HCT116 (cell line): ENCODE measurements at regions of chr3 and their contacts with region 1.

Region 1: GRCh38 chr3:192917404-192918274 is at the start of gene MB21D2:
- DNase-seq: peak; percentile 69
- ATAC-seq: peak; percentile 89
- H3K4me3 ChIP-seq: peak within 1 kb of the TSS; percentile 74 to 88
- H3K27ac ChIP-seq: peak within 1 kb of the TSS; percentile 58
- H3K4me1 ChIP-seq: peaks cover 0 to 19% of the 10 kb centered on the region in 2 experiments; a peak in 2 of 4 replicates
- H3K27me3 ChIP-seq: no peaks in the 10 kb centered on the region
- CTCF ChIP-seq: no peak
- POLR2A ChIP-seq: peak; percentile 82
- RAD21 ChIP-seq: no peak; the same call in 1 of the 2 replicates
- total RNA-seq, gene MB21D2: 2.8 TPM

Region 2: DNA sequence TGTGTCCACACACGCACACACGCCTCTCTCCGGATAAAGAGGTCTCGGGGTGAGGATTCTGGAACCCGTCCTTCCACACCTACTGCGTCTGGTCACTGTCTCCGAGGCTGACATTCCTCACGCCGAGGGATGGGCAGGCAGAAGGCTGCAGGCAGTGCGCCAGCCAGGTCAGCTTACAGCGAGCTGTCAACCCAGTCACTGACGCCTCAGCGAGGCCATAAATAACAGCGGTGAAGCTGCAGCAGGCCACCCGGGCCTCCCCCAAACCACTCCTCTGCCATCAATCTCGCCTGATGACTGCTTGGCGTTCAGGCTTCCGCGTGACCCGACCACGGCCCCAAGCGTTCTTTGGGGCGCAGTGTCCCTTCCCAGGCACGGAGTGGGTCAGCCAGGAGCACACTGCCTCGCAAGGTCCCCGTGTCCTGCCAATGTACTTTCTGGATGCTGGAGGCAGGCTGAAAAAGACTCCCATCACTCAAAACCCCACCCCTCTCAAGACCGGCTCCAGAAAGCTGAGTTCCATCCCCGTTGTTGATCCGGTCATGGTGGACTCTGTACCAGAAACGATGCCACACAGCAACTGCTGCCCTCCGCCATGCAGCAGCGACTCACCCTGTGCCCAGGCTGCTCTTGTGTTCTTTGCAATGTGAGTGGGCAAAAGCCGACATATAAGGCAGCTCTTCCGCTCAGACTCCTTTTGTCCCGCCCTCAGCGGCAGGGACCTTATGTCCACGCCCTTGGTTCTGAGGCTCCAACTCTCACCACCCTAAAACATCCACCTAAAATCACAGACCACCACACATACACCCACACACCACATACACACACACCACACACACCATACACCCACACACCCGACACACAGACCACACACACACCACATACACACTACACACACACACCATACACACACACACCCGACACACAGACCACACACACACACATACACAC is 1406.4 kb after region 1 on chr3:
- CTCF ChIA-PET with region 1: no interaction called
- POLR2A ChIA-PET with region 1: no interaction called
- RAD21 ChIA-PET with region 1: no interaction called
- intact Hi-C with region 1: loop called (anchors 5 kb)
- DNase-seq: peak; percentile 76
- ATAC-seq: peak; percentile 52
- H3K4me3 ChIP-seq: peak overlapping the region; percentile 44 to 61
- H3K27ac ChIP-seq: peak overlapping the region; percentile 95
- H3K4me1 ChIP-seq: peaks cover 35 to 90% of the 10 kb centered on the region in 2 experiments
- H3K27me3 ChIP-seq: no peaks in the 10 kb centered on the region
- CTCF ChIP-seq: no peak
- POLR2A ChIP-seq: peak; percentile 54
- RAD21 ChIP-seq: no peak